ENCODE measurements at regions of chr3 and their contacts with region 1.

Region 1: DNA sequence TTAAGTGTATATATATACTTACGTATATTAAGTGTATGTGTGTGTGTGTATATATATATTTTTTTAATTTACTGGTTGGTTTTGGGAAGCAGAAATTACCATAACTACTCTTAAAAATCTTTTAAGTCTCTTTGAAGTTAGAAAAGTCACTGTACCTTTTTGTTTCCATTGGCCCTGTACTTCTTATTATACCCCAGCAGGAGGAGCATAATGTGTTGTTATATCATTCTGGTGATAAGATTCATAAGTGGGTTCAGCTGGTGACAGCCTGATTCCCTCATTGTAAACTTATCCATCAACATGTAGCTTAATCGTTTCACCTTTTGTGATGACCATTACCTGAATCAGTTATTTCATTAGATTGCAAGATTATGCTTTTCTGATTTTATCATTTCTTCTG is 30.8 kb downstream of the MLH1 start:
- DNase-seq: no peak
- ATAC-seq: no peak

Region 2: GRCh38 chr3:36969540-36970432 is 54.3 kb before region 1 on chr3:
- intact Hi-C with region 1: no loop called
- DNase-seq: no peak
- ATAC-seq: peak; percentile 92

Region 3: DNA sequence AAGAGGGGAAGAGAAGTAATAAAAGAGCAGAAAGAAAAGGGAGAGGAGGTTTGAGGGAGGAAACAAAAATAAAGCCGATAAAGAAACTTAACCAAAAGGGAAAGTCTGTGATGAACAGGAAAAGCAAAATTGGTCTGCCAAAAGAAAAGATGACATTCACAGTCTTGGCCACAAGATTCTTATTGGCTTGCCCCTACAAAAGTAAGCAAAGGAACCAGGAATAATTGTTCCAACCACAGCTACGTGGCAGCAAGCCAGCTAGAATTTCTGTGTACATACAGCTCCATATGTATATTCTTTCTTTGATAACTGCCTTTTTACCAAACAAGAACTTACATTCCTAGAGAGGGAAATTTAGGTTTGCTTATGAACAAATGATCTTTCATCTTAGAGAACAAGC is 48.8 kb after region 1 on chr3:
- intact Hi-C with region 1: no loop called
- DNase-seq: no peak
- ATAC-seq: no peak

Region 4: GRCh38 chr3:37210230-37210629 is 186.1 kb after region 1 on chr3:
- intact Hi-C with region 1: loop called (anchors 10 kb)
- DNase-seq: no peak
- ATAC-seq: peak; percentile 73

Measured in Right ventricle myocardium superior (tissue), 1 donor.